Panc1 (cell line): ENCODE measurements at regions of chr17 and their contacts with region 1.

Region 1: DNA sequence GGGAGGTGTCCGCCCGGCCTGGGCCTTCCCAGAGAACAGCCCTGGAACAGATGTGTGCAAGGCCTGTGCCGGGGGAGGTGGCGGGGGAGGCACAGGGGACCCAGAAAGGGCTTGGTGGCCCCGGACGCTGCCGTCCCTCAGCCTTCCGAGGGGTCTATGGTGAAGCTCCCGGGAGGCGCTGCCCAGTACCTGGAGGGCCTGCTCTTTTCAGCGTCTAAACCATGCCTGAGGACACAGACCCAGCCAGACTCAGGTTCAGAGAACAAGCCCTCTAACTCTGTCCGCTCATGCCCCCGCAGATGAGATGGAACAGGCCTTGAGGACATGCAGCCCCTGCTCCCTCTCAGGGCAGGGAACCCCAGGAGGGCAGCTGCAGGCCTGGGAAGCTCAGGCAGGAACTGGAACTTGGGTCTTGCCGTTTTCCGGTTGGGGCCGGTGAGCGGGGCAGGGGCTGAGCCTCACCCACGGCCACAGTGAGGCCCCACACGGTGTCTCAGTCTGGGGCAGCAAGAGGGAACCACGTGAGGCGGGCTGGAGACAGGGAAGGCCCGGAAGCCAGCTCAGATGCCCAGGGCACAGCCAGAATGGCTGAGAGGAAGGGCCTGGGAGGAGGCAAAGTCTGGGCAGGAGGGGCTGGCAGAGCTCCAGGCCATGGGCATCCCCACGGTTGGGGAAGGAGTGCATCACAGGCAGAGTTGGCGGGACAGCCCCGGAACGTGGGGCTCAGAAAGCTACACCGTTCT is 12.5 kb downstream of the SLC16A3 start:
- DNase-seq: no peak
- ATAC-seq: peak; percentile 28
- H3K4me3 ChIP-seq: no peak overlapping the region
- H3K27ac ChIP-seq: peak overlapping the region; percentile 94
- H3K4me1 ChIP-seq: peaks cover 89% of the 10 kb centered on the region
- H3K27me3 ChIP-seq: no peaks in the 10 kb centered on the region
- CTCF ChIP-seq: no peak

Region 2: DNA sequence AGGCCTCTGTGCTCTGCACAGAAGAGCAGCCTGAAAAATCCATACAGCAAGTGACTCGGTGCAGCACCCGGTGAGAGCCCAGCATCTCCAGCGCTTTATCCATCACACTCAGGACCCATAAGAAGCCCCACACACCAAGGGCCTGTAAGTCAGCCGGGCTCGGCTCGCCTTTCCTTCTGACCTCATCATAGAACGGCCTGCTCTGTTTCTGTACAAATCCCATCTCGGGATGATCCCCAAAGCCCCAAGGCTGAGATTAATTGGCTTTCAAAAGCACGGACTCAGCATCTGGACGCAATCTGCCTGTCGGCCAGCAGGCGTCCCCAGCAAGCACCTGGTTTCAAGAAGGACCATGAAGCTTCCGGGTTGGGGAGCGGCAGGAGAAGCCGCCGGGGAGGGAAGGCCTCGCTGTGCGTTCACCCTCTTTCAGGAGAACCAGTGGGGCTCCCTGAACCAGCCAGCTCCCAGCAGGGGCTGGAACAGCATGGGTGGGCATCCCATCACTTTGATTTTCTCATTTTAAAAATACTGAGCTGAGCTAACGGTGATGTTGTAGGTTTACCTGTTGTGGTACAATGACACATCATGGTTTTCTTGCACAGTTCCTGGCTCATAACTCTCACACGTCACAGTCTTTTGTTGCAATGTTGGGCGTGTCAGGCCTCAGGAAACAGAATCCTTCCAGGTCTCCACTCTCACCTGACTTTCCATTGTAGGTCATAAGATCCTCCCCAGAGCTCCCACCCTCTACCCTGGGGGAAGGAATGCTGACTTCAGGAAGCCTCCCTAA is 35.4 kb before region 1 on chr17:
- CTCF ChIA-PET with region 1: interaction called, 11 read pairs
- POLR2A ChIA-PET with region 1: interaction called, 7 read pairs
- in situ Hi-C with region 1: no loop called
- intact Hi-C with region 1: no loop called
- DNase-seq: peak; percentile 75
- ATAC-seq: peak; percentile 81
- H3K4me3 ChIP-seq: peak overlapping the region in 1 of 2 experiments; percentile 16; a peak in 1 of 4 replicates
- H3K27ac ChIP-seq: peak overlapping the region; percentile 95
- H3K4me1 ChIP-seq: peaks cover 41% of the 10 kb centered on the region
- H3K27me3 ChIP-seq: no peaks in the 10 kb centered on the region
- CTCF ChIP-seq: peak; percentile 97

Region 3: GRCh38 chr17:82216301-82217119 is 24.8 kb before region 1 on chr17:
- CTCF ChIA-PET with region 1: no interaction called
- POLR2A ChIA-PET with region 1: no interaction called
- in situ Hi-C with region 1: no loop called
- intact Hi-C with region 1: no loop called
- DNase-seq: no peak
- ATAC-seq: peak; percentile 28
- H3K4me3 ChIP-seq: no peak overlapping the region
- H3K27ac ChIP-seq: peak overlapping the region; percentile 86
- H3K4me1 ChIP-seq: peaks cover 46% of the 10 kb centered on the region
- H3K27me3 ChIP-seq: no peaks in the 10 kb centered on the region
- CTCF ChIP-seq: no peak

Region 4: DNA sequence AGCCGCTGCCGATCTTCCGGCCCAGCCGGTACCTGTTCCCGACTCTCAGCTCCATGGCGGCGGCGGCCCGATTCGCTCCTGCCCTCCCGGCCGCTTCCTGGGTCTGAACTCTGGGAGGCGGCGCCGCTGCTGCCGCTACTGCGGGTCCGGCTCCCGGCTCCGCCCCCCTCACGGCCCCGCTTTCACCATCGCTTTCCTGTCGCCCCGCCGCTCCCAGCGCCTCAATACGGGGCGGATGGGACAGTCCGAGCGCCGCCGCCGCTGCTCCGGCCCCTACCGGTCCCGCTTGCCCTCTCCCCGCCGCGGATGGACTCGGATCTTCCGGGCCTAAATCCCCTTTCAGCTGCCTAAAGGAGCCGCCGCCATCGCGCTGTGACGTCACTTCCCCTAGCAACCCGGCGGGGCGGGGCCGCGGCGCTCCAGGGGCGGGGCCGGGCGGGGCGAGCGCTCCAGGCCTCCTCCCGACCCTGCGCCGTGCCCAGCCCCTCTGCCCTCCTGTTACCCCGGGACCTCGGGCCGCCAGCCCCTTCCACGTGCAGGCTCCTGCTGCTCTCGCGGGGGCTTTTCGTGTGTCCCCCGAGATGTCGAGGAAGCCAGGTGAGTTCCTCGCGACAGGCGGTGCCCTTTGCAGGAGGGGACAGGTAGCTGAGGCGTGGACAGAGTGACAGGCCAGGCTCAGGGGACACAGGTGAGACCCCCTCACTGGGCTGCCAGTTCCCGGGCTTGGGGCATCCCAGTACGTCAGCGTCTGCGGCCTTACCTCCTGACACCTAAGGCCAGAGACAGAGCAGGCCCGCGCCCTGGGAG is 32.2 kb after region 1 on chr17 and contains the start of gene CSNK1D:
- CTCF ChIA-PET with region 1: no interaction called
- POLR2A ChIA-PET with region 1: no interaction called
- in situ Hi-C with region 1: no loop called
- intact Hi-C with region 1: no loop called
- DNase-seq: no peak
- ATAC-seq: peak; percentile 93
- H3K4me3 ChIP-seq: peak within 1 kb of the TSS; percentile 66 to 80
- H3K27ac ChIP-seq: peak within 1 kb of the TSS; percentile 90
- H3K4me1 ChIP-seq: peaks cover 53% of the 10 kb centered on the region
- H3K27me3 ChIP-seq: no peaks in the 10 kb centered on the region
- CTCF ChIP-seq: no peak
- total RNA-seq, gene CSNK1D: 234 TPM

Region 5: DNA sequence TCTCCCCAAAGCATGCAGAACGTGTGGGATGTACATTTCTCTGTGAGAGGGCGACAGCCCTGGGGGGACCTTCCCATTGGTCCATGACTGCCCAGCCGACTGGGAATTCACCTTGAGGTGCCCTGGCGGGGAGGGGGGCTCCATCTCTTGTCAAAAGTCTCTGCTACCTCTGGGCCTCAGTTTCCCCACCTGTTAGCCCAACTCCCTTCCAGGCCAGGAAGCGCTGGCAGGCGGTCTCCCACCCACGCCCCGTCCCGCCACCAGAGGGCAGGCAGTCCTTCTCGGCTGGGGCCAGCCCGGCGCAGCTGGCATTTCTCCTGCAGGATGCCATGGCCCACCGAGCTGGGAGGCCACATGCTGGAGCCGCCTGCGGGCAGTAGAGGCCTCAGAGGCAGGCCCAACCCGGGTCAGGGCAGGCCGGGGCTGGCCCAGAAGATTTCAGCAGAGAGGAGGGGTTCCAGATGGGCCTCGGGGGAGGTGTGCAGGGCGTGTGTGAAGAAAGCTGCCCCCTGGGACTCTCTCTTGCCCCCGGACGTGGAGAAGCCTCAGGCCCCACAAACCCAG is 59.4 kb after region 1 on chr17:
- CTCF ChIA-PET with region 1: no interaction called
- POLR2A ChIA-PET with region 1: no interaction called
- in situ Hi-C with region 1: no loop called
- intact Hi-C with region 1: no loop called
- DNase-seq: no peak
- ATAC-seq: peak; percentile 40
- H3K4me3 ChIP-seq: no peak overlapping the region
- H3K27ac ChIP-seq: no peak overlapping the region
- H3K4me1 ChIP-seq: peaks cover 56% of the 10 kb centered on the region
- H3K27me3 ChIP-seq: no peaks in the 10 kb centered on the region
- CTCF ChIP-seq: peak; percentile 97

Region 6: GRCh38 chr17:82338858-82339633 is 97.7 kb after region 1 on chr17:
- CTCF ChIA-PET with region 1: no interaction called
- POLR2A ChIA-PET with region 1: interaction called, 17 read pairs
- in situ Hi-C with region 1: no loop called
- intact Hi-C with region 1: loop called (anchors 5 kb)
- DNase-seq: no peak
- ATAC-seq: peak; percentile 81
- H3K4me3 ChIP-seq: peak overlapping the region; percentile 35 to 62
- H3K27ac ChIP-seq: peak overlapping the region; percentile 96
- H3K4me1 ChIP-seq: peaks cover 56% of the 10 kb centered on the region
- H3K27me3 ChIP-seq: no peaks in the 10 kb centered on the region
- CTCF ChIP-seq: no peak